HEK293 (cell line): ENCODE measurements at regions of chr3 and their contacts with region 1.

Region 1: DNA sequence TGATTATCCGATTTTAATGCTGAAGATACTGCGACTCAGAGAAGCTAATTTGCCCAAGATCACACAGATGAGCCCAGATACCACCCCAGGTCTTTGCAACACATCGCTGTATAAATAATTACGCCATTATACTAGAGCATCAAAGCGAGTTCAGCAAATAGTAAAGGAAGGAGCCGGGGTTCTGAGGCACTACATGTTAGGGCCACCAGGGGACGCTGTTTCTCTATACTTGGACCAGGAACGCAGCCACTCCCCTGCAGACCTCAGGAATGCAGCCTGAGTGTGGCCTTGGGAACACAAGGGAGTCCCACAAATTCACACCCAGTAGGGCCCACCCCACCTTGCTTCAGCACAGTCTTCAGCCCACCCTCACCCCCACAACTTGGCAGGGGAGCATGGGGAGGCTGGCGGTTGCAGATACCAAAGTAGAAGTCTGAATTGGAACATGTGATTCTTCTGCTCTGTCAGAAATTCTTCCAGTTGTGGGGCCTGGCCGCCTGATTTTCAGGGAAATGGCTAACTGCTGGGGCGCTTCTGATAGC is 57.8 kb upstream of the RYK start:
- H3K4me3 ChIP-seq: no peak overlapping the region
- H3K27ac ChIP-seq: no peak overlapping the region
- H3K4me1 ChIP-seq: no peaks in the 10 kb centered on the region
- CTCF ChIP-seq: peak; percentile 82

Region 2: GRCh38 chr3:134212906-134213665 is 95.3 kb before region 1 on chr3:
- CTCF ChIA-PET with region 1: interaction called, 31 read pairs
- POLR2A ChIA-PET with region 1: no interaction called
- H3K4me3 ChIP-seq: no peak overlapping the region
- H3K27ac ChIP-seq: no peak overlapping the region
- H3K4me1 ChIP-seq: no peaks in the 10 kb centered on the region
- CTCF ChIP-seq: 0 out of 2 replicates have a peak, but pooled peaks have one; percentile 61

Region 3: DNA sequence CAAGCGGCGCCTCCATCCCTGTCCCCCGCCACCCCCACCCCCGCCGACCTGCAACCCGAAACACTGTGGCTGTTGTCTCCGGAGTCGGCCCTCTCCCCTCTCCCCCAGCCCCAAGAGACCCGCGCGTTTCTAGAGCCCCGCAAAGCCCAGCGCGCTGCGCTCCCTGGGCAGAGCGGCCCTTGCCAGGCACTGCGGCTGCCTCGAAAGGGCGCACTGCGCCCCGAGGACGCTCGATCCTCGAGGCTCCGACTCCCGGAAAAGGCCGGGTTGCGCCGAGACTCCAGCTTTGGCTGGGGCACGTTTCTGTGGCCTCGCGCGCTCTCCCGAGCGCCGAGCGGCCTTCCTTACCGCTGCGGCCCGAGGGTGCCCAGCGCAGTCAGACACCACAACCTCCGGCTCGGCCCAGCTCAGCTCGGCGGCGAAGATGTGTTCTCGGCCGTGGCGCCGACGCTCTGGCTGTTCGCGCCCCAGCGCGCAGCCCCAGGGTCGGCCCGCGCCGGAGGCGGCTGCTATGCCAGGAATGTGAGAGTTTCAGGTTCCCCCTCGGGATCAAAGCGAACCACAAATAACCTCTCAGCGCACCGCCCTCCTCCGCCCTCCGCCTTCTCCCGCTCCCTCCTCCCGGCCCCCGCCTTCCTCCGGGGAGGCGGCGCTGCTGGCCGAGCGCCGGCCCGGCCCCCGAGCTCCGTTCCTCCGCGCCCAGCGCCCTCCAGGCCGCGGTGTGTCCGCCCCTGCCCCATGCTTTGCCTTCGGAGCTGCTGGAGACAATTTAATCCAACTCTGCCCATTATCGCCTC is 65.8 kb after region 1 on chr3 and contains the start of gene AMOTL2:
- CTCF ChIA-PET with region 1: interaction called, 29 read pairs
- POLR2A ChIA-PET with region 1: interaction called, 4 read pairs
- H3K4me3 ChIP-seq: peak within 1 kb of the TSS; percentile 89
- H3K27ac ChIP-seq: peak within 1 kb of the TSS; percentile 90
- H3K4me1 ChIP-seq: peaks cover 2% of the 10 kb centered on the region; the same call in 1 of the 2 replicates
- CTCF ChIP-seq: no peak

Region 4: GRCh38 chr3:134449277-134449676 is 140.9 kb after region 1 on chr3:
- CTCF ChIA-PET with region 1: interaction called, 16 read pairs
- POLR2A ChIA-PET with region 1: no interaction called
- H3K4me3 ChIP-seq: no peak overlapping the region
- H3K27ac ChIP-seq: no peak overlapping the region
- H3K4me1 ChIP-seq: no peaks in the 10 kb centered on the region
- CTCF ChIP-seq: no peak

Region 5: GRCh38 chr3:134485718-134486576 is 177.5 kb after region 1 on chr3 and contains the starts of genes ANAPC13 and CEP63:
- CTCF ChIA-PET with region 1: interaction called, 24 read pairs
- POLR2A ChIA-PET with region 1: interaction called, 3 read pairs
- H3K4me3 ChIP-seq: peak within 1 kb of the TSS; percentile 60
- H3K27ac ChIP-seq: peak within 1 kb of the TSS; percentile 89
- H3K4me1 ChIP-seq: no peaks in the 10 kb centered on the region
- CTCF ChIP-seq: no peak; the same call in 1 of the 2 replicates